ENCODE measurements at regions of chr1 and their contacts with region 1.

Region 1: GRCh38 chr1:9004700-9005394 is 21.4 kb downstream of the SLC2A7 start:
- DNase-seq: peak; percentile 84
- ATAC-seq: peak; percentile 86
- H3K4me3 ChIP-seq: no peak overlapping the region
- H3K27ac ChIP-seq: no peak overlapping the region
- H3K4me1 ChIP-seq: no peaks in the 10 kb centered on the region
- H3K27me3 ChIP-seq: no peaks in the 10 kb centered on the region
- CTCF ChIP-seq: peak; percentile 92

Region 2: GRCh38 chr1:8962812-8963530 is 41.9 kb before region 1 on chr1:
- CTCF ChIA-PET with region 1: interaction called, 11 read pairs
- POLR2A ChIA-PET with region 1: no interaction called
- intact Hi-C with region 1: no loop called
- DNase-seq: peak; percentile 56
- ATAC-seq: peak; percentile 35; the same call in 1 of the 2 replicates
- H3K4me3 ChIP-seq: no peak overlapping the region
- H3K27ac ChIP-seq: no peak overlapping the region
- H3K4me1 ChIP-seq: no peaks in the 10 kb centered on the region
- H3K27me3 ChIP-seq: no peaks in the 10 kb centered on the region
- CTCF ChIP-seq: peak; percentile 73

Region 3: GRCh38 chr1:9101510-9102146 is 96.8 kb after region 1 on chr1:
- CTCF ChIA-PET with region 1: interaction called, 11 read pairs
- POLR2A ChIA-PET with region 1: no interaction called
- intact Hi-C with region 1: loop called (anchors 2 kb)
- DNase-seq: peak; percentile 56
- ATAC-seq: peak; percentile 96
- H3K4me3 ChIP-seq: no peak overlapping the region
- H3K27ac ChIP-seq: no peak overlapping the region
- H3K4me1 ChIP-seq: no peaks in the 10 kb centered on the region
- H3K27me3 ChIP-seq: no peaks in the 10 kb centered on the region
- CTCF ChIP-seq: peak; percentile 77

Region 4: DNA sequence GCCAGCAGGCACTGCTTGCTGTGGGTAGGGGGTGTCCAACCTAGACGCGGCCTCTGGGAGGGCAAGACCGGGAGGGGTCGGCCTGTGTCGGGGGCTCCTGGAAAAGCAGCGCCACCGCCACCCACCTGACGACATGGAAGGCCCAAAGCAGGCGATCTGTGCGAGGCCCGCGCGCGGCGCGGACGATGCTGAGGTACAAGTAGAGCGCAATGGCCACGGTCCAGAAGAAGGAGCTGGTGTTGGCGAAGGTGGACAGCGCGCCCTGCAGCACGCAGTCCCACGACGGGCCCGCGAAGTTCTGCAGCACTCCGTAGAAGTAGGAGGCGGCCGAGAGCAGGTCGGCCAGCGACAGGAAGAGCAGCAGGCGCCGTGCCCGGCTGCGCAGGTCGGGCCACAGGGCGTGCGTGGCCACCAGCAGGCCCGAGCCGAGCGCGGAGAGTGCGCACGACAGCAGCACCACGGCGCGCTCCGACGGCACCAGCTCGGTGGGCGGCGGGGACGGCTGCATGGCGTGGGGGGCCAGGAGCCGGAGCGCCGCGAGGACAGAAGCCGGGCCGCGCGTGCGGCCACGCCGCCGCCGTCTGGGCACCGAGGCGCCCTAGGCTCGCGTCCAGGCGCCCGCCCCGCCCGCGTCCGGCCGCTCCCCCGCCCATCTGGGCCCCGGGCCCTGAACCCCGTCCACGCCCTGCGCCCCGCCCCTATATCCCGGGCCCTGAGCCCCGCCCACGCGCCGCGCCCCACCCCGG is 123.8 kb after region 1 on chr1 and contains the start of gene GPR157:
- CTCF ChIA-PET with region 1: no interaction called
- POLR2A ChIA-PET with region 1: no interaction called
- intact Hi-C with region 1: no loop called
- DNase-seq: peak; percentile 79
- ATAC-seq: peak; percentile 75
- H3K4me3 ChIP-seq: peak within 1 kb of the TSS; percentile 94
- H3K27ac ChIP-seq: peak within 1 kb of the TSS; percentile 25
- H3K4me1 ChIP-seq: peaks cover 13% of the 10 kb centered on the region
- H3K27me3 ChIP-seq: no peaks in the 10 kb centered on the region
- CTCF ChIP-seq: no peak; the same call in 1 of the 2 replicates
- total RNA-seq, gene GPR157: 7.3 and 7.9 TPM in 2 replicates

Region 5: DNA sequence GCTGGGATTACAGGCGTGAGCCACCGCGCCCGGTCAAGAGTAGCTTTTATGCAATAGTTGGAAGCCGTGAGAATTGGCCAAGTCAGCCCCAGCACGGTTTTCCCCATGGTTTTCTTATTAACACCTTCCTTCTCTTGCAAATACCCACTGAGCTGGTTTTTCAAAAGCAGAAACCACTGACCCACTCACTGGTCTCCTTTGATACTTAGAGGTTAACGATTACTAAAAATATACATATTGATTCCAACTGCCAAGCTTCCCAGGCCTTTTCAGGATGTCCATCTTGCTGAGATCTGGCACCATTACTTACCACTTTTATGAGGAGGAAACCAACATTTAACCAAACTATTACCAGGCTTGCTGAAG is 1981.7 kb after region 1 on chr1:
- CTCF ChIA-PET with region 1: no interaction called
- POLR2A ChIA-PET with region 1: no interaction called
- intact Hi-C with region 1: no loop called
- DNase-seq: no peak
- ATAC-seq: no peak
- H3K4me3 ChIP-seq: no peak overlapping the region
- H3K27ac ChIP-seq: no peak overlapping the region
- H3K4me1 ChIP-seq: no peaks in the 10 kb centered on the region
- H3K27me3 ChIP-seq: peaks cover 4% of the 10 kb centered on the region; the same call in 1 of the 2 replicates
- CTCF ChIP-seq: no peak